ENCODE measurements at regions of chr10 and their contacts with region 1.

Region 1: GRCh38 chr10:33819206-33819605 is 484.7 kb upstream of the NRP1 start:
- DNase-seq: no peak
- ATAC-seq: no peak
- H3K4me3 ChIP-seq: no peak overlapping the region
- H3K27ac ChIP-seq: no peak overlapping the region
- H3K4me1 ChIP-seq: no peaks in the 10 kb centered on the region
- H3K27me3 ChIP-seq: no peaks in the 10 kb centered on the region
- CTCF ChIP-seq: no peak

Region 2: DNA sequence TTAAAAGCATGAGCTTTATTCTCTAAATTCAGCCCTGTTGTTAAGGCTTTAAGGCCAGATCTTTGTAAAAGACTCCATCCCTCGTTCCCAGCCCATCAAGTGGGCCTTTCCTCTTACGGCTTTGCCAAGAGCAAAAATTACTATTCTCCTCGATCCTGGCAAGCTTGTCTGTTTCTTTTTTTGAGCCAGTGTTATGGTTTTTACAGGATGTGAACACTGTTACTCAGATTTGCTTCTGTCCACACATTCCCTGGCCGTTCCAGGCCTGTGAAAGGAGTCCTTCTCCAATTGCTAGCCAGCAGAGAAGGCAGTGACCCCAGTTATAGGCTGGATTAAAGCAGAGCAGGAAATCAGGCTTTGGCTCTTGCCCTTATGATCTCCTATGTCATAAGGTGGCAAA is 1425.3 kb before region 1 on chr10:
- intact Hi-C with region 1: loop called in 1 of 2 experiments (anchors 5 kb)
- DNase-seq: no peak
- ATAC-seq: no peak
- H3K4me3 ChIP-seq: no peak overlapping the region
- H3K27ac ChIP-seq: no peak overlapping the region
- H3K4me1 ChIP-seq: peaks cover 8% of the 10 kb centered on the region
- H3K27me3 ChIP-seq: no peaks in the 10 kb centered on the region
- CTCF ChIP-seq: no peak

Measured in psoas muscle (tissue), 8 donors.